Mammary epithelial cell (primary cell): ENCODE measurements at regions of chr20 and their contacts with region 1.

Region 1: DNA sequence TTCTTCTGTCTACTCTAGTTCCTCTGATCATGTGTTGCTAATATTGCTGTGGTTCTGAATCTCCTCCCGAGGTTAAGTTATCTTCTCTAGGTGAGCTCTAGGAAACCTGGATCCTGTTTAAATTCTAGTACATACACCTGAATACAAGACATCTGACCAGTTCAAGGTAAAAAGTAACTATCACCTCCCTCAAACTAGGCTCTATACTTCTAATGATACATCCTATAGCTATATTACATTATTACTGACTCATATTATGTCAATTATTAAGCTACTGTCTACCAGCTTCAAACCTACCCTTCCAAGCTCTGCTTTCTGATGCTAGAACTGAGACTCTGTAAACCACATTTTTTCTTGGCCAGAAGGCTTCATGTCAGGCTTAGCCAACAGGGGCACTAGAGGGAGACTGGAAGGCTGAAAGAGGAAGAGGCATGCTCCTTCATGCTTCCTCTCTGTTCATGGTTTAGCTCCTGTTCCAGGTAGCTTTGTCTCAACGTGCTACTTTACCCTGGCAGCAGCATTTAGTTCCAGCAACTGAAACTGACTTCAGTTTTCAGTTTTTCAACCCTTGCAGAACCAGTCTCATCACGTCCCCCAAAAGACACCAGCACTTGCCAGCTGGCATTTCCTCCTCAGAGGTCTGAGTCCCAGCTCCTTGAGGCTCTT is 148.4 kb upstream of the TOP1 start:
- DNase-seq: peak; percentile 23
- H3K4me3 ChIP-seq: no peak overlapping the region
- H3K27ac ChIP-seq: no peak overlapping the region
- H3K4me1 ChIP-seq: no peaks in the 10 kb centered on the region
- H3K27me3 ChIP-seq: peaks cover 5% of the 10 kb centered on the region
- CTCF ChIP-seq: peak in 1 of 2 donors; percentile 42

Region 2: GRCh38 chr20:40781327-40782042 is 98.7 kb before region 1 on chr20:
- CTCF ChIA-PET with region 1: no interaction called
- dilution Hi-C with region 1: no loop called
- in situ Hi-C with region 1: no loop called
- intact Hi-C with region 1: no loop called
- DNase-seq: no peak
- H3K4me3 ChIP-seq: no peak overlapping the region
- H3K27ac ChIP-seq: no peak overlapping the region
- H3K4me1 ChIP-seq: no peaks in the 10 kb centered on the region
- H3K27me3 ChIP-seq: peaks cover 2% of the 10 kb centered on the region
- CTCF ChIP-seq: no peak

Region 3: GRCh38 chr20:40811660-40812414 is 68.4 kb before region 1 on chr20:
- CTCF ChIA-PET with region 1: no interaction called
- dilution Hi-C with region 1: no loop called
- in situ Hi-C with region 1: no loop called
- intact Hi-C with region 1: no loop called
- DNase-seq: no peak
- H3K4me3 ChIP-seq: no peak overlapping the region
- H3K27ac ChIP-seq: no peak overlapping the region
- H3K4me1 ChIP-seq: no peaks in the 10 kb centered on the region
- H3K27me3 ChIP-seq: no peaks in the 10 kb centered on the region
- CTCF ChIP-seq: peak; percentile 3 to 18

Region 4: GRCh38 chr20:40843251-40843650 is 36.9 kb before region 1 on chr20:
- CTCF ChIA-PET with region 1: interaction called, 11 read pairs
- dilution Hi-C with region 1: no loop called
- in situ Hi-C with region 1: no loop called
- intact Hi-C with region 1: no loop called
- DNase-seq: no peak
- H3K4me3 ChIP-seq: no peak overlapping the region
- H3K27ac ChIP-seq: no peak overlapping the region
- H3K4me1 ChIP-seq: no peaks in the 10 kb centered on the region
- H3K27me3 ChIP-seq: no peaks in the 10 kb centered on the region
- CTCF ChIP-seq: no peak